ENCODE measurements at regions of chr9 and their contacts with region 1.

Region 1: DNA sequence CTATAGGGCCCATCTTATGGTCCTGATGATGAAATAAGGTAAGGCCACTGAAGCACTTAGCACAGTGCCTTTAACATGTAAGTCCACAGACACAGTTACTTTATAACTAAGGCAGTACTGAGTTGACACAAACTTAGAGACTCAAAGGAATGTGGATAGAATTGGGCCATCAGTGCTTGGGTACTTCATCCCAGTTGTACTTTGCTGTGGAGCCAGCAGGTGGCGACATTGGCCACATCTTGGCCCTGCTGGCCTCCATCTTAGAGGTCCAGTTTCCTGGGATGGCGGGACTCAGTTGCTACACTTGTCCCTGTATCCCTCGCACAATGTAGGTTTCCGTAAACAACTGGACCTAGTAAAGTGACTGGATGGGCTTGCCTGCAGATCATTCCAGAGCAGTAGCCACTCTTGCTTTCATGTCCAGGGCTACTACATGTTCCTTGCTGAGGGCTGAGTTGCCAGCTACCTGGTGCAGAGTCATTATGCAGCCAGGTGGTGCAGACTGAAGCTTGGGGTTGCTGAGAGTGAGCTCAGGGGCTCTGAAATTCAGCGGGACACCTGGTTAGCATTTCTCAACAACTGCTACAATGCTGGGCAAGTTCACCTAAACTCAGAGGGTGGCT is 10.6 kb downstream of the MTAP start:
- DNase-seq: no peak
- H3K4me3 ChIP-seq: no peak overlapping the region
- H3K27ac ChIP-seq: no peak overlapping the region
- H3K27me3 ChIP-seq: no peaks in the 10 kb centered on the region
- CTCF ChIP-seq: peak; percentile 87

Region 2: GRCh38 chr9:21591221-21592062 is 221.6 kb before region 1 on chr9:
- CTCF ChIA-PET with region 1: no interaction called
- POLR2A ChIA-PET with region 1: no interaction called
- DNase-seq: peak; percentile 91
- H3K4me3 ChIP-seq: no peak overlapping the region
- H3K27ac ChIP-seq: peak overlapping the region; percentile 89
- H3K27me3 ChIP-seq: no peaks in the 10 kb centered on the region
- CTCF ChIP-seq: no peak

Region 3: GRCh38 chr9:21831961-21832509 is 19.0 kb after region 1 on chr9:
- CTCF ChIA-PET with region 1: interaction called, 11 read pairs
- POLR2A ChIA-PET with region 1: no interaction called
- DNase-seq: peak; percentile 81
- H3K4me3 ChIP-seq: no peak overlapping the region
- H3K27ac ChIP-seq: peak overlapping the region; percentile 86
- H3K27me3 ChIP-seq: no peaks in the 10 kb centered on the region
- CTCF ChIP-seq: no peak

Region 4: DNA sequence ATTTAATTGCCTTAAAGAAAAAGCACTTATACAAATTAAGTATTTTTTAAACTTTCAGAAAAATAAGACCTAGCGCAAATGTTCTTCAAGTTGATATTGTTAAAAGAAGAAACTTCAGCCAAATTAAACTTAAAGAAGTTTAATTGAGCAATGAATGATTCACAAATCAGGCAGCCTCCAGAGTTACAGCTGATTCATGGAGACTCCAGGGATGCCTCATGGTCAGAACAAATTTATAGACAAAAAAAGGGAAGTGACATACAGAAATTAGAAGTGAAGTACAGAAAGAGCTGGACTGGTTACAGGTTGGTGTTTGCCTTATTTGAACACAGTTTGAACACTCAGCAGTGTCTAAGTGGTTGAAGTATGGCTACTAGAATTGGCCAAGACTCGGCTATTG is 120.8 kb after region 1 on chr9:
- CTCF ChIA-PET with region 1: no interaction called
- POLR2A ChIA-PET with region 1: no interaction called
- DNase-seq: no peak
- H3K4me3 ChIP-seq: no peak overlapping the region
- H3K27ac ChIP-seq: no peak overlapping the region
- H3K27me3 ChIP-seq: no peaks in the 10 kb centered on the region
- CTCF ChIP-seq: no peak

Region 5: DNA sequence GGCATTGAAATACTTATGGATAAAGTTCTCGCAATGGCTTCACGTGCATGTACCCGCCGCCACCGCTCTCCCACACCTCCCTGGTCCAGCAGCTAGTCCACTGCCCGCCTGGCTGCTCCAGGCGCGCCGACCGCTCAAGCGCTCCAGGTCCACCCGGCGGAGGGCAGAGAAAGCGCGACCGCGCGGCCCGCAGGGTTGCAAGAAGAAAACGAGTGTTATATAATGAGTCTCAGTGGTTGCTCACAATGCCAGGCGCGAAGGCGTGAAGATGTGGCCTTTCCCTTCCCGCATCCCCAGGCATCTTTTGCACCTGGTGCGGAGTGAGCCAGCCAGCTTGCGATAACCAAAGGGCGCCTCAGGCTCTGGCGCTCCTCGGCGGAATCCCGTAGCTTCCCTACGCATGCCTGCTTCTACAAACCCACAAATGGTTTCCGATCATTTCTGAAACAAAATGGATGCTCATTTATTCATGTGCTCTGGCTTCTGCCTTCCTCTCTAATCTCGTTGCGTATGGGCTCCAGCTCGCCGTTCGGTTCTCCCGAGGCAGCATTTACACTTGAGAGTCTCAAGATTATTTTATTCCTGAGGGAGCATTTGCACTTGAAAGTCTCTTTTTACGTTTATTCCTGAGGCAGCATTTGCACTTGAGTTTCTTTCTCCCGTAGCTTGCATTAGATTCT is 155.4 kb after region 1 on chr9:
- CTCF ChIA-PET with region 1: interaction called, 16 read pairs
- POLR2A ChIA-PET with region 1: no interaction called
- DNase-seq: no peak
- H3K4me3 ChIP-seq: 0 out of 2 replicates have a peak overlapping the region, but pooled peaks have one; percentile 25
- H3K27ac ChIP-seq: no peak overlapping the region
- H3K27me3 ChIP-seq: peaks cover 57% of the 10 kb centered on the region
- CTCF ChIP-seq: no peak

Region 6: DNA sequence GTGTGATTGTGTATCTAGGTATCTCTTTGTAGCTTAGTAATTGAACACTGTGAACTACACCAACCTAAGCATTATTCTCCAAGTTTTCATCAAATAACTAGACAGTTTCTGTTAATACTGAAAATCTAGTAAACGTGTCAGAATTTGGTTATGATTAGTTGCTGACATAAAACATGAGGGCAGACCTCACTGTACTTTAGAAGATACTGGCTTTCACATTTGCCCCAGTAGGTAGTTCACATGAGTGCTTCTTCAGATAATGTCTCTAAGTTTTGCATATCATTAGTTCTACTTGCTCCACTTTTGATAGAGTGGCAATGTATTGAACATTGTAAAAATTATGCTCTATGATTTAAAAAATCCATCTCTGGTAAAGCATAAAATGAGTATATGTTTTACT is 189.0 kb after region 1 on chr9:
- CTCF ChIA-PET with region 1: interaction called, 192 read pairs
- POLR2A ChIA-PET with region 1: no interaction called
- DNase-seq: no peak
- H3K4me3 ChIP-seq: no peak overlapping the region
- H3K27ac ChIP-seq: no peak overlapping the region
- H3K27me3 ChIP-seq: no peaks in the 10 kb centered on the region
- CTCF ChIP-seq: no peak

Region 7: GRCh38 chr9:22052376-22052945 is 239.4 kb after region 1 on chr9:
- CTCF ChIA-PET with region 1: interaction called, 10 read pairs
- POLR2A ChIA-PET with region 1: no interaction called
- DNase-seq: peak; percentile 91
- H3K4me3 ChIP-seq: no peak overlapping the region
- H3K27ac ChIP-seq: peak overlapping the region; percentile 39
- H3K27me3 ChIP-seq: no peaks in the 10 kb centered on the region
- CTCF ChIP-seq: no peak

Region 8: DNA sequence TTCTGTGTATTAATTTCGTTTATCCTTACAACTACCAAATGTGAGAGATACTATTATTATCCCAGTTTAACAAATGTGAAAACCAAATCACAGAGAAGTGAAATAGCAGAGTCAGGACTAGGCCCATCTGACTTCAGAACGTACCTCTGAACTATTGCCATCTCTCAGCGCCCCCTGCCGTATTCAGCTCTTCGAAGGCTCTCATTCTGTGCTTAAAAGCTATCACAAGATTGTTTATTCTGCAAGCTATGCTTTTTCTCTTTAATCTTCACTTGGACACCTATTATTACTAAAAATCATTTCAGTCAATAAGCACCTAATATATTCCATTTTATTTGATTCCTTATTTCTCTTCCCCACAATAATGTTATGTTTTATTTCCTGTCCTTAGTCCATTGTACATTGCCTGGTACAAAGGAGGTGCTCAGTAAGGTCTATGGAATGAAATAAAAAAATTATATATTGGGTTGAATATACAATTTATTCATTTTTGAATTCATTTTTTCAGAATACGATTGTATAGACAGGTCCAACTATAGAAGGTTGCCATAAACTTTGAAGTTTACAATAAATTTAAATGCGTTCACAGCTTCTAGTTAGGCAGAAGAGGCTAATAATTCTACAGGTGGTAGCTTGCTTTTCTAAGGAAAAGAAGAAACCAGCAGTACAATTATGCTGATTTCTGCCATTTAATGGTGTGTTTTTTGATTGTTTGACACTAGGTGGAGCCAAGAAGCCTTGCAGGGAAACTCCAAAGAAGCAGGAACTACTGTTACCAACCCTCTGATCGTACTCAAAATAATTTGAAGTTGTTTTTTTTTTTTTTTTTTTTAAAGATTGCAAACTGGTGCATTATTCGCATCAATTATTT is 431.3 kb after region 1 on chr9:
- CTCF ChIA-PET with region 1: interaction called, 235 read pairs
- POLR2A ChIA-PET with region 1: no interaction called
- DNase-seq: no peak
- H3K4me3 ChIP-seq: no peak overlapping the region
- H3K27ac ChIP-seq: no peak overlapping the region
- H3K27me3 ChIP-seq: no peaks in the 10 kb centered on the region
- CTCF ChIP-seq: peak; percentile 74